Colonic mucosa (tissue), 4 donors: ENCODE measurements at regions of chr7 and their contacts with region 1.

Region 1: GRCh38 chr7:140003913-140004382 is 58.8 kb downstream of the PARP12 start:
- DNase-seq: peak; percentile 46
- H3K4me3 ChIP-seq: no peak overlapping the region
- H3K27ac ChIP-seq: no peak overlapping the region
- H3K4me1 ChIP-seq: no peaks in the 10 kb centered on the region
- H3K27me3 ChIP-seq: no peaks in the 10 kb centered on the region
- CTCF ChIP-seq: peak; percentile 42

Region 2: GRCh38 chr7:139494835-139495579 is 508.9 kb before region 1 on chr7:
- intact Hi-C with region 1: loop called (anchors 5 kb)
- DNase-seq: no peak
- H3K4me3 ChIP-seq: no peak overlapping the region
- H3K27ac ChIP-seq: no peak overlapping the region
- H3K4me1 ChIP-seq: no peaks in the 10 kb centered on the region
- H3K27me3 ChIP-seq: no peaks in the 10 kb centered on the region
- CTCF ChIP-seq: no peak

Region 3: GRCh38 chr7:139557857-139558581 is 445.9 kb before region 1 on chr7:
- intact Hi-C with region 1: no loop called
- DNase-seq: peak; percentile 30
- H3K4me3 ChIP-seq: no peak overlapping the region
- H3K27ac ChIP-seq: no peak overlapping the region
- H3K4me1 ChIP-seq: no peaks in the 10 kb centered on the region
- H3K27me3 ChIP-seq: no peaks in the 10 kb centered on the region
- CTCF ChIP-seq: no peak

Region 4: DNA sequence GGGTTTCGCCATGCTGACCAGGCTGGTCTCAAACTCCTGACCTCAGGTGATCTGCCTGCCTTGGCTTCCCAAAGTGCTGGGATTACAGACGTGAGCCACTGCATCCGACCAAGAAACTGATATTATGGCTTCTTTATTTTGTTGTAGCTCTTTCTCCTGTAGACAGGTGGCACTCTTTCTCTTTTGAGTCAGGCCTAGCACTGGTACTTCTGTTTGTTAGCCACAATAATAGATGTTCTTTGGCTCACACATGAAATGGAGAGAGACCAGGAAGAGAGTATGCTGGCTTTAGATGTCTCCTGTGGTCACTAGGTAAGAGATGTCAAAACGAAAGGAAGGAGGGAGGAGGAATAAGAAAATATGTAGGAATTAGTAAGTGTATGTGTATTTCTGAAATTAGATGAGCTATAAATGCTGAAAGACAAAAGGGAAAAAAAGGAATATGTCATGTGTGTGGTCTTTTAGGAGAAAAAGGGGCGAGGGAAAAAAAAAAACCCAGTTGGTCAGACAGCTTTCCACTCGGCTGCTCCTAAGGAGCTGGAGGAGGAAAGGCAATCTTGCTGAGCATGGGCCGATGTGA is 401.7 kb before region 1 on chr7:
- intact Hi-C with region 1: loop called (anchors 2 kb)
- DNase-seq: no peak
- H3K4me3 ChIP-seq: no peak overlapping the region
- H3K27ac ChIP-seq: no peak overlapping the region
- H3K4me1 ChIP-seq: no peaks in the 10 kb centered on the region
- H3K27me3 ChIP-seq: no peaks in the 10 kb centered on the region
- CTCF ChIP-seq: peak; percentile 30

Region 5: GRCh38 chr7:139645572-139646523 is 358.1 kb before region 1 on chr7:
- intact Hi-C with region 1: loop called (anchors 2 kb)
- DNase-seq: peak; percentile 89
- H3K4me3 ChIP-seq: no peak overlapping the region
- H3K27ac ChIP-seq: no peak overlapping the region
- H3K4me1 ChIP-seq: peaks cover 4% of the 10 kb centered on the region
- H3K27me3 ChIP-seq: no peaks in the 10 kb centered on the region
- CTCF ChIP-seq: peak; percentile 95

Region 6: DNA sequence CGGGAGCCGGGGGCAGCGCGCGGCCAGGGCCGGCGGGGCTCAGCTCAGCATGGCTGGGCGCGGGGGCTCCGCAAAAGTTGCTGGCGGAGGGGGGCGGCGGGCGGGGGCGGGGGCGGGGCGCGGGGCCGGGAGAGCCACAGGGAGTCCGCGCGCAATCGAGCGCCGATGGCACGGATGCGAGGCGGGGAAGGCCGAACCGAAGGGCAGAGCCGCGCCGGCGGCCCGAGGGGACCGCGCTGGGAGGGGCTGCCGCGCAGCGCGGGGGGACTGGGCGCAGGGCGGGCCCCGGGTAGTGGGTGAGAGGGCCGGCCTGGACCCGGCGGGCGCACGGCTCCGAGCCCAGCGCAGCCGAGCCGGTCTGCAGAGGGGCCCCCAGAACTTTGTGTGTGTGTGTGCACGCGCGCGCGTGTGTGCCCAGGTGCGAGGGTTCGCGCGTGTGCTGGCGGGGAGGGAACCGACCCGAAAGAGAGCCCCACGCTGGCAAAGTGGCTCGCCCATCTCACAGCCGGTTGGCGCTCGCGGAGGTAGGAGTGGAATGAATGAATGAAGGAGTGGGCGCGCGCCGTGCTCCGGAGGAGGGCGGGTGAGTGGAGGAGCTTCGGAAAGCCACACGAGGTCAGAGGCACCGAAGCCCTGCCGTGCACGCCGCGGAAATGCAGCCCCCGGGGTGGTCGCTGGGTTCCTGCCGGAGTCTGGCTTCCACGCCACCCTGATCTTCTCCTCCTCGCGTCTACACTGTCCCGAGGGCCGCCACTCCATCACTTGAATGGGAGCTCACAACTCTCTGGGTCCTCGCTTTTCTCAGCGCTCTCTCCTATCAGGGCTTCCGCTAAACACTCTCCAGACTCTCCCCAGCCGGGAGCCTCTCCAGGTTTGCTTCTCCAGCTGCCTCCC is 225.8 kb before region 1 on chr7 and contains the start of gene HIPK2:
- intact Hi-C with region 1: loop called (anchors 5 kb)
- DNase-seq: peak; percentile 77
- H3K4me3 ChIP-seq: peak within 1 kb of the TSS; percentile 88
- H3K27ac ChIP-seq: peak within 1 kb of the TSS; percentile 60
- H3K4me1 ChIP-seq: peaks cover 14% of the 10 kb centered on the region
- H3K27me3 ChIP-seq: no peaks in the 10 kb centered on the region
- CTCF ChIP-seq: no peak
- total RNA-seq, gene HIPK2: 25.3 to 28.4 TPM

Region 7: DNA sequence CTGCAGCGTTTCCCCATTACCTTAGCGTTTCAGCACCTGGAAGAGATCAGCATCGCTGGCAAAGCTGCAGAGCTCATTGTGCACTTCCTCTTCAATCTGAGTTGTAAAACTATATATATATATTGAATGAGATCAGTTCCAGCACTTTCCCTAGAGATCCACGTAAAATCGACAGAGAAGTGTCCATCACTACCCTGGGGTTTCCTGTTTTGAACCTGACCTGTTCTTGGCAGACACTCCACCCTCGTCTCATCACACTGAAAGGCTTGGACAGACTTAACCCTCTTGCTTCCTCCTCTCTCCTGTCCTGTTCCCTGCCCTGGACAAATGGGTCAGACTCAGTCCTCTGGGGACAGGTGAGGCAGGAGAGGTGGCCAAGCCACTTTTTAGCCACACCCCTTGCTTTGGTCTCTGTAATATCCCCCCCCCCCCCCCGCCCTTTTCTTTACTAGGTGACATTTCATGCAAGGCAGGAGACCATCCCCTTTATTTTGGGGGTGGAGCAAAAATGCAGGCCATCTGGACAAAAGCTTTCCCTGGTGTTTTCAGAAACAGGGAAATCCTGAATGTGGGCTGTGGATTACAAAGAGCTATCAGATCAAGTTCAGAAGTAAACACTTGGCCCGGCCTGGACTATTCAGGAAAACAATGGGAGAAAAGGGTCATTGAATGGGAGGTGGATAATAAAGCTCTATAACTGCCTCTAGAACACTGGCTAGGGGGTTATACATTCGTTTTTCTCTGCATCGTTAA is 256.6 kb after region 1 on chr7:
- intact Hi-C with region 1: no loop called
- DNase-seq: peak; percentile 50
- H3K4me3 ChIP-seq: peak overlapping the region; percentile 22
- H3K27ac ChIP-seq: peak overlapping the region; percentile 64
- H3K4me1 ChIP-seq: peaks cover 8% of the 10 kb centered on the region
- H3K27me3 ChIP-seq: no peaks in the 10 kb centered on the region
- CTCF ChIP-seq: no peak